ENCODE measurements at regions of chrX and their contacts with region 1.

Region 1: DNA sequence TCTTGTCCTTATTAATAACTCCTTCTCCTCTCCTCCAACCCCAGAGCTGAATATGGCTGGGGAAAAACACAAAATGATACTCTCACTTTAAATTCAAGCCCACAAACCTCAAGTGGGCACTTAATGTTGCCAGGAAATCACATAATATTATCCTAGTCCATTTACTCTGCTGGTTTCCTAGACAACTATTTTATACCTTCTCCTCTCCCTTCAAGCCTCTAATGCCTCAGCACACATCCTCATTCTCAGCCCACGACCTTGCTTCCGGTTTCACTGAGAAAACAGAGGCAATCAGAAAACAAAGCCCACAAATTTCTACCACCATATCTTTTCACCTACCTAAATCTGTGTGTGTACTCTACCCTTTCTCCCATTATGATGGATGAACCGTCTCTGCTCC is 12.1 kb upstream of the CLCN5 start:
- DNase-seq: no peak
- ATAC-seq: no peak

Region 2: GRCh38 chrX:49710729-49711304 is 199.5 kb before region 1 on chrX:
- intact Hi-C with region 1: no loop called
- DNase-seq: no peak
- ATAC-seq: no peak

Region 3: GRCh38 chrX:50204364-50204899 is 294.1 kb after region 1 on chrX and contains the start of gene CCNB3:
- intact Hi-C with region 1: loop called in 1 of 2 experiments (anchors 5 kb)
- DNase-seq: peak; percentile 75
- ATAC-seq: peak; percentile 93 to 98
- total RNA-seq, gene CCNB3: 0.15 to 0.18 TPM